ENCODE measurements at regions of chr7 and their contacts with region 1.

Region 1: DNA sequence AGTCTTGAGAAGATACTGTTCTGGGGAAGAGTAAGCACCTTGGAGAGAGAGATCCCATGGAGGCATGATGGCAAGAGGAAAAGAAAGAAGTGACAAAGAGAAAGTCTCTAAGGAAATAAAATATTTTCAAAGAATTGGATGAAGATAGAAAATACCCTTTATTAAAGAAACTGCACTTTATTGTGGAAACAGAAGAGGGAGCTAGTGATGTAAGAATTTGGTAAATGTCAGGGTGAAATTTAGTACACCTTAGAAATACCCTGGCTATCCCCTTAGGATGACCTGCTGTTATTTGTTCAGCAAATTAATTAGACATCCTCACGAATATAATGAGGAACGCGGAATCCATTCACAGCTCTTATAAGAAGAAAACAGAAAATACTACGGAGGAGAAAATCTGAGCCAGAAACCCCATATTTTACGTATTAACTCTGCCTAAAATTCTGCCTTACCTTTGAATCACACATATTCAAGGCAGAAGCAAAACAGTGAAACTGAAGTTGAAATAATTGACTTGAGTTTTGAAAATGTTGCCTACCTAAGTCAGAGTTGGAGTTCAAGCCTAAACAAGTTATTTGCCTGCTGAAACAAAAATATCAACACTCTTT is 90.7 kb downstream of the TFPI2 start:
- DNase-seq: no peak
- H3K4me3 Mint-ChIP-seq: no peak overlapping the region
- H3K27ac Mint-ChIP-seq: no peak overlapping the region
- H3K4me1 Mint-ChIP-seq: no peaks in the 10 kb centered on the region
- H3K27me3 Mint-ChIP-seq: no peaks in the 10 kb centered on the region

Region 2: GRCh38 chr7:92645114-92646061 is 1154.5 kb before region 1 on chr7:
- CTCF ChIA-PET with region 1: no interaction called
- intact Hi-C with region 1: no loop called
- DNase-seq: peak; percentile 64
- H3K4me3 Mint-ChIP-seq: no peak overlapping the region
- H3K27ac Mint-ChIP-seq: peak overlapping the region; percentile 88
- H3K4me1 Mint-ChIP-seq: peaks cover 90% of the 10 kb centered on the region
- H3K27me3 Mint-ChIP-seq: no peaks in the 10 kb centered on the region

Region 3: GRCh38 chr7:94395141-94396036 is 595.5 kb after region 1 on chr7:
- CTCF ChIA-PET with region 1: no interaction called
- intact Hi-C with region 1: loop called (anchors 10 kb)
- DNase-seq: peak; percentile 46
- H3K4me3 Mint-ChIP-seq: no peak overlapping the region
- H3K27ac Mint-ChIP-seq: no peak overlapping the region
- H3K4me1 Mint-ChIP-seq: peaks cover 7% of the 10 kb centered on the region
- H3K27me3 Mint-ChIP-seq: peaks cover 35% of the 10 kb centered on the region

Measured in activated naive CD4-positive, alpha-beta T cell treated with anti-CD3 and anti-CD28 coated beads for 36 hours (primary cell).